Heart left ventricle (tissue), 16 donors: ENCODE measurements at regions of chr3 and their contacts with region 1.

Region 1: GRCh38 chr3:171187706-171188290 is 161.3 kb upstream of the SLC2A2 start:
- DNase-seq: no peak
- ATAC-seq: peak; percentile 51 to 72 (median 64)
- H3K4me3 ChIP-seq: no peak overlapping the region
- H3K27ac ChIP-seq: no peak overlapping the region
- H3K4me1 ChIP-seq: peaks cover 0 to 42% (median 12%) of the 10 kb centered on the region in 12 donors
- H3K27me3 ChIP-seq: no peaks in the 10 kb centered on the region
- CTCF ChIP-seq: peak; percentile 39 to 72 (median 54)
- POLR2A ChIP-seq: no peak

Region 2: GRCh38 chr3:170792471-170792870 is 395.3 kb before region 1 on chr3:
- intact Hi-C with region 1: no loop called
- DNase-seq: no peak
- ATAC-seq: no peak
- H3K4me3 ChIP-seq: no peak overlapping the region
- H3K27ac ChIP-seq: no peak overlapping the region
- H3K4me1 ChIP-seq: no peaks in the 10 kb centered on the region
- H3K27me3 ChIP-seq: no peaks in the 10 kb centered on the region
- CTCF ChIP-seq: no peak
- POLR2A ChIP-seq: no peak

Region 3: GRCh38 chr3:171234298-171235010 is 46.7 kb after region 1 on chr3:
- intact Hi-C with region 1: no loop called
- DNase-seq: peak in 2 of 5 donors; percentile 35 to 58
- ATAC-seq: peak; percentile 41 to 68 (median 56)
- H3K4me3 ChIP-seq: no peak overlapping the region
- H3K27ac ChIP-seq: peak overlapping the region in 1 of 12 donors; percentile 13
- H3K4me1 ChIP-seq: peaks cover 0 to 35% (median 17%) of the 10 kb centered on the region in 12 donors
- H3K27me3 ChIP-seq: no peaks in the 10 kb centered on the region
- CTCF ChIP-seq: no peak
- POLR2A ChIP-seq: no peak

Region 4: DNA sequence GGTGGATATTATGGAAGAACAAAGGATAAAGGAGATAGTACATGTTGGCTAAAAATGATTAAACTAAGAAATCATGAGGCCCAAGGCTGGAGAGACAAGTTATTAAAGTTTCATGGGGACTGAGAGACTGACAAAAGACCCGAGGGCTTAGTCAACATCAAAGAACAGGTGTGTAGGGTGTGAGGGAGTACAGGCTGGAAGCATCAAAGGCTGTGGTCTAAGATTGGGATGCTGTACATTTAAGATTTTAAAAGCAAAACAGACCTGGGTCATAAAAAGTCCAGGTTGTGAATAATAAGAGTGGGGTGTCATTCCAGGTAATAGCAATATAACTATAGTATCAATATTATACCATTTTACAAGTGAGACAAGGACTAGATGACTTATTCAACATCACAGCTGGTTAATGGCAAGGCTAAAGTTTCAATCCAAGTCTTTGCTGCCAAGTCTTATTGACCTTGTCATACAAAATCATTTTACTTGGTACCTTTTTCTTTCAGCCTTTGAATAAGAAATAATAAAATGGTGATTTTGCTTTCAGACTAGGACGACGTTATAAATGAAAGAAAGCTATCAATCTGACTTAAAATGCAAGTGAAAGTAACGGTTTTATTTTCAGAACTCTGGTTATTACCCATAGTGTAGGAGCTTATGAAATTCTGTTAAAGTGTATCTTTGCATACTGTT is 60.8 kb after region 1 on chr3:
- intact Hi-C with region 1: loop called in 1 of 10 experiments (anchors 10 kb)
- DNase-seq: no peak
- ATAC-seq: no peak
- H3K4me3 ChIP-seq: no peak overlapping the region
- H3K27ac ChIP-seq: peak overlapping the region in 1 of 12 donors; percentile 35
- H3K4me1 ChIP-seq: peaks cover 0 to 18% (median 0%) of the 10 kb centered on the region in 12 donors
- H3K27me3 ChIP-seq: no peaks in the 10 kb centered on the region
- CTCF ChIP-seq: no peak
- POLR2A ChIP-seq: no peak

Region 5: GRCh38 chr3:171293142-171293782 is 105.5 kb after region 1 on chr3:
- intact Hi-C with region 1: loop called in 2 of 10 experiments (anchors 10 kb)
- DNase-seq: no peak
- ATAC-seq: no peak
- H3K4me3 ChIP-seq: no peak overlapping the region
- H3K27ac ChIP-seq: peak overlapping the region in 1 of 12 donors; percentile 80
- H3K4me1 ChIP-seq: peaks cover 0 to 46% (median 24%) of the 10 kb centered on the region in 12 donors
- H3K27me3 ChIP-seq: no peaks in the 10 kb centered on the region
- CTCF ChIP-seq: no peak
- POLR2A ChIP-seq: no peak

Region 6: GRCh38 chr3:171320750-171321558 is 133.2 kb after region 1 on chr3:
- intact Hi-C with region 1: loop called in 6 of 10 experiments (anchors 5 to 10 kb)
- DNase-seq: peak in 4 of 5 donors; percentile 43 to 65 (median 52)
- ATAC-seq: peak; percentile 94 to 97 (median 95)
- H3K4me3 ChIP-seq: peak overlapping the region in 2 of 12 donors; percentile 0 to 1
- H3K27ac ChIP-seq: peak overlapping the region in 10 of 12 donors; percentile 9 to 69 (median 47)
- H3K4me1 ChIP-seq: peaks cover 0 to 52% (median 37%) of the 10 kb centered on the region in 12 donors
- H3K27me3 ChIP-seq: no peaks in the 10 kb centered on the region
- CTCF ChIP-seq: no peak
- POLR2A ChIP-seq: no peak

Region 7: DNA sequence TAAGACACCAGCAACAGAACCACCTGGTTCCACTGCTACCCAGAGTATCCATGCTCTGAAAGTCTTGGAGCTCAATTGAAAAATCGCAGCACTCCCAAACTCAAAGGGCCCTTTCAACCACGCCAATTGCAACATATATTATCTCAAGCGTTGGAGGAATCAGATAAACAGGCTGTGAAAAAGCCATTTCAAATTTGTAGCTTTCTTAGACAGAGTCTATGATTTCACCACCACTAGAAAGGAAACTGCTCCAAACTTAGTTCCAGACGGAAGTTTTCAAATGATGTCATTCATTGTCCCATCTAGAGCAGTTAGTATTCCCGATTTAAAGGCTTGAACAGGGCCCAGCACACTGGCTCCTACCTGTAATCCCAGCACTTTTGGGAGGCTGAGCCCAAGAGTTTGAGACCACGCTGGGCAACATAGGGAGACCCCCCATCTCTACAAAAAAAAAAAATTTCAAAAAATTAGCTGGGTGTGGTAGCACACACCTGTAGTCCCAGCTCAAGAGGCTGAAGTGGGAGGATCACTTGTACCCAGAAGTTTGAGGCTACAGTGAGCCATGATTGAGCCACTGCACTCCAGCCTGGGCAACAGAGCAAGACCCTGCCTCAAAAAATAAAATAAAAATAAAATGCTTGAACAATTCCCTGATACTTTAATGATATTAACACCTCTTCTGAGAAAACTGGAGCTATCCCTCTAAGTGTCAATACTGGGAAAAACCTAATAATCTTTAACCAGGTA is 255.6 kb after region 1 on chr3:
- intact Hi-C with region 1: no loop called
- DNase-seq: no peak
- ATAC-seq: peak in 3 of 4 donors; percentile 63 to 82 (median 67)
- H3K4me3 ChIP-seq: no peak overlapping the region
- H3K27ac ChIP-seq: no peak overlapping the region
- H3K4me1 ChIP-seq: peaks cover 0 to 26% (median 6%) of the 10 kb centered on the region in 12 donors
- H3K27me3 ChIP-seq: no peaks in the 10 kb centered on the region
- CTCF ChIP-seq: no peak
- POLR2A ChIP-seq: no peak

Region 8: DNA sequence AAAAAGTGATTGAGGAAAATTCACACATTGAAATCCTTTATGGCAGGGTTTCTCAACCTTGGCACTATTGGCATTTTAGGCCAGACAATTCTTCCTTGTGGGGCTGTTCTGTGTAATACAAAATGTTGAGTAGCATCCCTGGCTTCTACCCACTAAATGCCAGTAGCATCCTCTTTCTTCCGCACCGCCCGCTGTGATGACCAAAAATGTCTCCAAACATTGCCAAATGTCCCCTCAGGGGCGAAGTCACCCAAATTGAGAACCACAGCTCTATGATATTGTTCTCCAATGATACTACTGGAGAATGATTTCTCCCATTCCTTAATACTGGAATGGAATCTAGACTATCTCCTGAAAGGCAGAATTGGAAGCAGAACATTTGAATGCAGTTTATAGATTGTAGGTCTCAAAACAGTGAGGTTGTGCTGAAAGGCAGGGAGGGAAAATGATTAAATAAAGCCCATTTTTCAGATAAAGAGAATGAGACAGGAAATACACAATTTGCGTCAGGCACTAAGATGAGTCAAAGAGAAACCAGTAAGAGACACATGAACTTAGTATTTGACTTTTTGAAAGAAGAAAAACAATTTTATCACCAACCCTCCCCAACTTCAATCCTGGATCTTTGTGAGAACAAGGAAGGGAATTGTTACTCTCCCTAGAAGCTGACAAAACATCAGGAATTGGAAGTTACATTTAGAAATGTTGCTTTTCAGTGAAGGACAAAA is 374.0 kb after region 1 on chr3:
- intact Hi-C with region 1: loop called in 8 of 10 experiments (anchors 2 to 10 kb)
- DNase-seq: no peak
- ATAC-seq: no peak
- H3K4me3 ChIP-seq: no peak overlapping the region
- H3K27ac ChIP-seq: no peak overlapping the region
- H3K4me1 ChIP-seq: peaks cover 0 to 26% (median 8%) of the 10 kb centered on the region in 12 donors
- H3K27me3 ChIP-seq: no peaks in the 10 kb centered on the region
- CTCF ChIP-seq: no peak
- POLR2A ChIP-seq: no peak